Activated B cell treated with CpG ODN at 0.5 μM for 24 hours (primary cell): ENCODE measurements at regions of chr4 and their contacts with region 1.

Region 1: GRCh38 chr4:151362404-151363164 is 37.2 kb upstream of the SH3D19 start:
- DNase-seq: peak; percentile 22
- ATAC-seq: peak; percentile 95
- H3K4me3 Mint-ChIP-seq: no peak overlapping the region
- H3K27ac Mint-ChIP-seq: no peak overlapping the region
- H3K4me1 Mint-ChIP-seq: no peaks in the 10 kb centered on the region
- H3K27me3 Mint-ChIP-seq: peaks cover 7% of the 10 kb centered on the region
- CTCF ChIP-seq: peak; percentile 35

Region 2: DNA sequence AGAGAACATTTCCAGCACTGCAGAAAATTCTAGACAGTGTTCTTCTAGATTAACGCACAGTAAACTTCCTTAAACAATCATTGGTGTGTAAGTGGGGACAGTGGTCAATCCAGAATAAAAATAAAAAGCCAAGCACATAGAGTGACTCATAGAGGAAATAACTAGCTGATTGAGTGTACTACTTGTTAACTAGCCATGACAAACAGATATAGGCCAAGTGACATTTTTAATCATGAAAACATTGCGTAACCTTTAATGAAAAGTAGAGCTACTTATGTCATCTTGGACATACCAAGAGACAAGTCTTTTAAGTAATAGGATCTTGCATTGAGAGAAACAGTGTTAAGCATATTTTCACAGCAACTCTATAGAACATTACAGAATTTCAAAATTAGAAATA is 1014.5 kb before region 1 on chr4:
- CTCF ChIA-PET with region 1: no interaction called
- POLR2A ChIA-PET with region 1: no interaction called
- intact Hi-C with region 1: no loop called
- DNase-seq: no peak
- ATAC-seq: no peak
- H3K4me3 Mint-ChIP-seq: no peak overlapping the region
- H3K27ac Mint-ChIP-seq: no peak overlapping the region
- H3K4me1 Mint-ChIP-seq: no peaks in the 10 kb centered on the region
- H3K27me3 Mint-ChIP-seq: no peaks in the 10 kb centered on the region
- CTCF ChIP-seq: no peak

Region 3: GRCh38 chr4:151604238-151604637 is 241.7 kb after region 1 on chr4:
- CTCF ChIA-PET with region 1: no interaction called
- POLR2A ChIA-PET with region 1: no interaction called
- intact Hi-C with region 1: loop called (anchors 10 kb)
- DNase-seq: no peak
- ATAC-seq: no peak
- H3K4me3 Mint-ChIP-seq: no peak overlapping the region
- H3K27ac Mint-ChIP-seq: no peak overlapping the region
- H3K4me1 Mint-ChIP-seq: no peaks in the 10 kb centered on the region
- H3K27me3 Mint-ChIP-seq: no peaks in the 10 kb centered on the region
- CTCF ChIP-seq: no peak

Region 4: GRCh38 chr4:152220201-152220666 is 857.6 kb after region 1 on chr4:
- CTCF ChIA-PET with region 1: no interaction called
- POLR2A ChIA-PET with region 1: no interaction called
- intact Hi-C with region 1: no loop called
- DNase-seq: no peak
- ATAC-seq: no peak
- H3K4me3 Mint-ChIP-seq: no peak overlapping the region
- H3K27ac Mint-ChIP-seq: no peak overlapping the region
- H3K4me1 Mint-ChIP-seq: no peaks in the 10 kb centered on the region
- H3K27me3 Mint-ChIP-seq: no peaks in the 10 kb centered on the region
- CTCF ChIP-seq: no peak